ENCODE measurements at regions of chr13 and their contacts with region 1.

Region 1: DNA sequence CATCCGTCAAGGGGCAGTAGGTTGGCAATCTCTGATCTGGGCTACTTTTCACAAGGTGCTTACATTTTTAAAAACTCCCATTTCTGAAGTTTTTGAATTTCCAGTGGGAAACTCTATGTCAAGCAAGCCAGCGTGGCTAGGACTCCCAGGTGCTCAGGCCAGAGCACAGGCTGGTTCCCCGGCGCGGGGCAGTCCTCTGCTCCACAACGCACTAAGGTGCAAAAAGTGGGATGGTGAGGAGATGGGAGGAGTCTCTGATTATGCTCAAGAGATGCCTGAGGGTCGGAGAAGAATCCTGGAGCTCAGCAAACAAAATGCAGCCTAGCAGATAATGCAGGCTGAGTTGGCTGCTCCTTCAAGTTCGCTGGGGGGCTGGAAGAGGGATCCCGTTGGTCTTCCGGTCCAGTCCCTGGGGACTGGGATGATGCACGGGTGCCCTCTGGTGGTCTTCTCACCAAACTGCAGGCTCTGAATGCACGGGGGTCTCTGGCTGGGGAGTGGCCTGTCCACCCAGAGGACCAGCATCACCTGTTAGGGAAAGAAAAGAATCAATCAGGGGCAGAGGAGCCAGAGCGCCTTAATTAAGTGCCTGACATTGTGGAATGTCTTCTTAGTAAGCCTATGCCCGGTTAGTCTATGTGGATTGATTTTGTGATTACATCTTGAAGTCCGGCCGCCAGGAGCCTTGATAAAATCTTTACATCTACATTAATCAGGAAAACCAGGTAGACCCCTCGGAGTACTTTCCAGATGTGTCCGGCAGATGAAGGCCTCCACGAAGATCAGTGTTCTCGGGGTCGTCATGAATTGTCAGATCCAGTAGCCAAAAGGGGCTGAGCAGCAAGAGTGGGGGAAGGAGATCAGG is 244.4 kb upstream of the MAB21L1 start:
- DNase-seq: peak; percentile 13
- ATAC-seq: peak; percentile 93
- H3K4me3 ChIP-seq: no peak overlapping the region
- H3K27ac ChIP-seq: no peak overlapping the region
- H3K4me1 ChIP-seq: peaks cover 2 to 4% of the 10 kb centered on the region in 2 experiments; a peak in 1 of 4 replicates
- H3K27me3 ChIP-seq: peaks cover 17% of the 10 kb centered on the region
- CTCF ChIP-seq: peak; percentile 34 to 96 (median 94); a peak in 4 of 6 replicates
- POLR2A ChIP-seq: no peak
- RAD21 ChIP-seq: peak; percentile 79

Region 2: GRCh38 chr13:33931397-33932311 is 1789.3 kb before region 1 on chr13:
- CTCF ChIA-PET with region 1: no interaction called
- POLR2A ChIA-PET with region 1: no interaction called
- RAD21 ChIA-PET with region 1: no interaction called
- intact Hi-C with region 1: loop called (anchors 5 kb)
- DNase-seq: peak; percentile 46
- ATAC-seq: peak; percentile 96
- H3K4me3 ChIP-seq: no peak overlapping the region
- H3K27ac ChIP-seq: no peak overlapping the region
- H3K4me1 ChIP-seq: peaks cover 0 to 5% of the 10 kb centered on the region in 2 experiments; a peak in 1 of 4 replicates
- H3K27me3 ChIP-seq: no peaks in the 10 kb centered on the region
- CTCF ChIP-seq: peak; percentile 48 to 72 (median 49); a peak in 5 of 6 replicates
- POLR2A ChIP-seq: no peak
- RAD21 ChIP-seq: peak; percentile 81

Region 3: GRCh38 chr13:35164324-35164932 is 556.5 kb before region 1 on chr13:
- CTCF ChIA-PET with region 1: interaction called, 3 read pairs
- POLR2A ChIA-PET with region 1: no interaction called
- RAD21 ChIA-PET with region 1: no interaction called
- intact Hi-C with region 1: loop called (anchors 1 kb)
- DNase-seq: peak; percentile 15
- ATAC-seq: peak; percentile 75
- H3K4me3 ChIP-seq: no peak overlapping the region
- H3K27ac ChIP-seq: no peak overlapping the region
- H3K4me1 ChIP-seq: no peaks in the 10 kb centered on the region
- H3K27me3 ChIP-seq: no peaks in the 10 kb centered on the region
- CTCF ChIP-seq: peak; percentile 31 to 71 (median 45); a peak in 4 of 6 replicates
- POLR2A ChIP-seq: no peak
- RAD21 ChIP-seq: peak; percentile 74

Region 4: DNA sequence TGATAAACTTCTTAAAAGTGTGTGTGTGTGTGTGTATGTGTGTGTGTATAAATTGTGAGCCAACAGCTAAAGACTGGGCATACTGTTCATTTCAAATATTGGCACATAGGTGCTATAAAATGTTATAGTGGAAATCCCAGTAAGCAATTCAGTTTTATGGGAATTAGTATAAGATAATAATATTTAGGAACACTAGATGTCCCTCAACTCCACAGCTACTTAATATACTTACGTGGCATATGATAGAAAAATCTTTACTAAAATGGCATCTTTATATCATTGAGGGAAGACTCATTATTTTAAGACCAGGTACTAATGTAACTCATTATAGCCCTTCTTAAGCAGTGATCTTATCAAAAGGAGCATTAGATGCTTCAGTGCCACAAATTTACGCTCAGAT is 510.7 kb before region 1 on chr13:
- CTCF ChIA-PET with region 1: interaction called, 3 read pairs
- POLR2A ChIA-PET with region 1: no interaction called
- RAD21 ChIA-PET with region 1: no interaction called
- intact Hi-C with region 1: loop called (anchors 1 kb)
- DNase-seq: no peak
- ATAC-seq: no peak
- H3K4me3 ChIP-seq: no peak overlapping the region
- H3K27ac ChIP-seq: no peak overlapping the region
- H3K4me1 ChIP-seq: no peaks in the 10 kb centered on the region
- H3K27me3 ChIP-seq: no peaks in the 10 kb centered on the region
- CTCF ChIP-seq: no peak
- POLR2A ChIP-seq: no peak
- RAD21 ChIP-seq: peak; percentile 37; the same call in 1 of the 2 replicates

Region 5: GRCh38 chr13:35630551-35631275 is 90.2 kb before region 1 on chr13:
- CTCF ChIA-PET with region 1: no interaction called
- POLR2A ChIA-PET with region 1: no interaction called
- RAD21 ChIA-PET with region 1: no interaction called
- intact Hi-C with region 1: loop called (anchors 2 kb)
- DNase-seq: peak; percentile 40
- ATAC-seq: peak; percentile 100
- H3K4me3 ChIP-seq: no peak overlapping the region
- H3K27ac ChIP-seq: no peak overlapping the region
- H3K4me1 ChIP-seq: peaks cover 0 to 7% of the 10 kb centered on the region in 2 experiments; a peak in 2 of 4 replicates
- H3K27me3 ChIP-seq: no peaks in the 10 kb centered on the region
- CTCF ChIP-seq: peak; percentile 26 to 86 (median 79); a peak in 4 of 6 replicates
- POLR2A ChIP-seq: no peak
- RAD21 ChIP-seq: peak; percentile 33; the same call in 1 of the 2 replicates

Region 6: GRCh38 chr13:35771898-35772297 is 51.0 kb after region 1 on chr13:
- CTCF ChIA-PET with region 1: no interaction called
- POLR2A ChIA-PET with region 1: no interaction called
- RAD21 ChIA-PET with region 1: no interaction called
- intact Hi-C with region 1: loop called (anchors 5 kb)
- DNase-seq: no peak
- ATAC-seq: no peak
- H3K4me3 ChIP-seq: no peak overlapping the region
- H3K27ac ChIP-seq: no peak overlapping the region
- H3K4me1 ChIP-seq: no peaks in the 10 kb centered on the region
- H3K27me3 ChIP-seq: peaks cover 50% of the 10 kb centered on the region
- CTCF ChIP-seq: no peak
- POLR2A ChIP-seq: no peak
- RAD21 ChIP-seq: no peak

Region 7: DNA sequence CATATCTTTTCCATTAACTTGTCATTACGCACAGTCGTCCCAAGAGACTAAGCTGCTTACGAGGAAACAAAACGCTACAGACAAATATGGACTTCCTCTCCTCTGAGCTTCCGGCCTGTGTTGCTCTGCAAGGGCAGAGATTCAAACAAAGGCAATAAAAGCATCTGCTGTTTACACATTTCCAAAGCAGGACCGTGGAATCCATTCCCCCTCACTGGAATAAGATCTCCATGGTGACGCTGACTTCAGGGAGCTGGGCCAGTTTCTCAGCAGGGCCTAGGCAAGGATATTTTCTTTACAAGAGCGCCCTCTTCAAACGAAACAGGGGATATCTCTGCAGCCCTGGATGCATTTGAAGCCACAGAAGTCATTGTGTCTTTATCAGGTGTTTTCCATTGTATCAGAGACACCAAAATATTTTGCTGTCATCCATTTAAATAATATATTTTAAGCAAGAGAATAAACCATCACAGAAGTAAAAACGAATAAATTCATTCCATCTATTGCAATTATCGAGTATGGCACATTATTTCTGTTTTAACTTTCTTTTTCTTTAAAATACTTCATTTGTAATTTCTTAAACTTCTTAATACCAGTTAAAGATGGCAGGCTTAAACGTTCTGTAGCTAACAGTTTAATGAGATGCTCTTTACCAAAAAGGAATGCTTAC is 232.8 kb after region 1 on chr13:
- CTCF ChIA-PET with region 1: interaction called, 4 read pairs
- POLR2A ChIA-PET with region 1: no interaction called
- RAD21 ChIA-PET with region 1: no interaction called
- intact Hi-C with region 1: loop called (anchors 5 kb)
- DNase-seq: peak; percentile 13
- ATAC-seq: peak; percentile 80
- H3K4me3 ChIP-seq: no peak overlapping the region
- H3K27ac ChIP-seq: no peak overlapping the region
- H3K4me1 ChIP-seq: no peaks in the 10 kb centered on the region
- H3K27me3 ChIP-seq: no peaks in the 10 kb centered on the region
- CTCF ChIP-seq: peak; percentile 16 to 54 (median 40); a peak in 4 of 6 replicates
- POLR2A ChIP-seq: no peak
- RAD21 ChIP-seq: peak; percentile 50